ENCODE measurements at regions of chr6 and their contacts with region 1.

Region 1: GRCh38 chr6:110864824-110865223 is 9.8 kb upstream of the AMD1 start:
- DNase-seq: no peak
- ATAC-seq: no peak
- H3K4me3 ChIP-seq: no peak overlapping the region
- H3K27ac ChIP-seq: no peak overlapping the region
- H3K4me1 ChIP-seq: peaks cover 16% of the 10 kb centered on the region
- H3K27me3 ChIP-seq: no peaks in the 10 kb centered on the region
- CTCF ChIP-seq: no peak
- EP300 ChIP-seq: no peak
- POLR2A ChIP-seq: no peak
- RAD21 ChIP-seq: no peak

Region 2: DNA sequence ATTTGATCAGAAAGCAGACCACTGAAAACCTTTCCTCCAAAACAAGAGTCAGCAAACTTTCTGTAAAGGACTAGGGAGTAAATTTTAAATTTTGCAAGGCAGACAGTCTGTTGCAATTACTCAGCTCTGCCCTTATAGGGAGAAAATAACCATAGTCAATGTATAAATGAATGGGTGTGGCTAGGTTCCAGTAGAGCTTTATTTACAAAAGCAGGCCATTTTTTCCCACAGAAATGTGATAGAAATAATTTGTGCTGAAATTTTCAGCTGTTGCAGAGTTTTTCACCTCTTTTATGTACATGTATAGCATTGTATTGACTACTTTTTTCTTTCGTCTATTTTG is 17.4 kb after region 1 on chr6:
- CTCF ChIA-PET with region 1: interaction called, 11 read pairs
- POLR2A ChIA-PET with region 1: interaction called, 40 read pairs
- RAD21 ChIA-PET with region 1: interaction called, 22 read pairs
- SMC1A ChIA-PET with region 1: interaction called, 37 read pairs
- in situ Hi-C with region 1: no loop called
- intact Hi-C with region 1: no loop called
- DNase-seq: no peak
- ATAC-seq: no peak
- H3K4me3 ChIP-seq: peak overlapping the region; percentile 40
- H3K27ac ChIP-seq: 0 out of 2 replicates have a peak overlapping the region, but pooled peaks have one; percentile 38
- H3K4me1 ChIP-seq: peaks cover 71% of the 10 kb centered on the region
- H3K27me3 ChIP-seq: no peaks in the 10 kb centered on the region
- CTCF ChIP-seq: no peak
- EP300 ChIP-seq: no peak
- POLR2A ChIP-seq: no peak
- RAD21 ChIP-seq: no peak

Region 3: DNA sequence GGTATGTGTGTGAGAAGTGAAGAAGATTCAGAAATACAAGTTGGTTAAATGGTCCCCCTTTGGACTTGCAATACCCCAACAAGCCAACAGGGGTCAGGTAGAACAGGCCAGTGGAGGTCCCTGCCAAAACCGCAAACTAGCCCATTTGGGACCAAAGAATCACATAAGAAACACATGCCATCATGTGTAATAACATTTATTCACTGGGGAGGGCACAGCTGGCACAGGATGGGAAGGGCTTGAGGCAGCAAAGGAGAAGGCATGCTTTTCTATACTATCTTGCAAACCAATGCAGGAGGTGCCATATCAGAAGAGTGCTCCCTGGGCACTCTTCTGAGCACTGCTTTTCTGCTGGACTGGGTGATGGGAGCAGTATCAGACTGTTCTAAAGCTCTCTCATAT is 856.9 kb after region 1 on chr6:
- CTCF ChIA-PET with region 1: no interaction called
- POLR2A ChIA-PET with region 1: no interaction called
- RAD21 ChIA-PET with region 1: no interaction called
- SMC1A ChIA-PET with region 1: no interaction called
- in situ Hi-C with region 1: no loop called
- intact Hi-C with region 1: no loop called
- DNase-seq: no peak
- ATAC-seq: peak; percentile 28
- H3K4me3 ChIP-seq: no peak overlapping the region
- H3K27ac ChIP-seq: no peak overlapping the region
- H3K4me1 ChIP-seq: peaks cover 40% of the 10 kb centered on the region
- H3K27me3 ChIP-seq: no peaks in the 10 kb centered on the region
- CTCF ChIP-seq: peak; percentile 50 to 68 (median 67)
- EP300 ChIP-seq: no peak
- POLR2A ChIP-seq: no peak
- RAD21 ChIP-seq: peak; percentile 75

Measured in GM12878 (cell line).